OCI-LY7 (cell line): ENCODE measurements at regions of chr17 and their contacts with region 1.

Region 1: DNA sequence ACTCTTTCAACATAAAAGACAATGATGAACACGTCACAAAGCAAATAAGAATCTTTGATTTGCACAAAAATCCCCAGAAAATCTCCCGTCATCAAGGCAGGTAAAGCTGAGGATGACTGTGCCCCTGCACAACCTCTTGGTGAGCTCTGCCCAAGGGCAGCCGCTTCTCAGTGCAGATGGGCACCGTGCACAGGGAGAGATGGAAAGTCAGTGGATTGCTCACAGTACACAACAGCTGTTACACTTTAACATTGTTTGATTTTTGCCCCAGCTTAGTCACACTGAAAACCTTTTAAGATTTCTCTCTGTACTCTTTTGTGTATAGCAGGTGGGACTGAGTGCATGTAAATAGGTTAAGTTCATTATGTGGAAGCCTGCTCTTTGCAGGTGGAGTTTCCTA is 104.2 kb downstream of the CDK5R1 start:
- DNase-seq: no peak
- H3K4me3 ChIP-seq: no peak overlapping the region
- H3K27ac ChIP-seq: no peak overlapping the region
- H3K4me1 ChIP-seq: no peaks in the 10 kb centered on the region
- CTCF ChIP-seq: no peak

Region 2: DNA sequence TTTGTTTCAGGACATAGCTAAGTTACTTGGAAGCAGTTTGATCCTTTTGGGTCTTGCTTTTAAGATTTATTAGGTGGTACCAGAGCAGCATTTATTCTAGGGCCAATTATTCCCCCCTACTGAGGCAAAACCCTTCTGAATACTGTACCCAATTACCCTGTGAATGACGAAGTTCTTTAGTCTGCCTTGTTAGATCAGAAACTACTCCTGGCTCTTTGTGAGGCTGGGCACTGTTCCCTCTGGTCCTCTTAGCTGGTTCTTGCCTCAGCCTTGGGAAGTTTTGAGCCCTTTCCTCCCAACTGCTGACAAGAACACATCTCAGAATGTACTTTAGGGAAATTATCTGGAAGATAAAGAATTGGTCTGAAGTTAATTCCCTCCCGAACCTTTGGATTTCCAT is 11.4 kb after region 1 on chr17:
- CTCF ChIA-PET with region 1: no interaction called
- POLR2A ChIA-PET with region 1: interaction called, 11 read pairs
- intact Hi-C with region 1: no loop called
- DNase-seq: no peak
- H3K4me3 ChIP-seq: no peak overlapping the region
- H3K27ac ChIP-seq: no peak overlapping the region
- H3K4me1 ChIP-seq: no peaks in the 10 kb centered on the region
- CTCF ChIP-seq: no peak

Region 3: DNA sequence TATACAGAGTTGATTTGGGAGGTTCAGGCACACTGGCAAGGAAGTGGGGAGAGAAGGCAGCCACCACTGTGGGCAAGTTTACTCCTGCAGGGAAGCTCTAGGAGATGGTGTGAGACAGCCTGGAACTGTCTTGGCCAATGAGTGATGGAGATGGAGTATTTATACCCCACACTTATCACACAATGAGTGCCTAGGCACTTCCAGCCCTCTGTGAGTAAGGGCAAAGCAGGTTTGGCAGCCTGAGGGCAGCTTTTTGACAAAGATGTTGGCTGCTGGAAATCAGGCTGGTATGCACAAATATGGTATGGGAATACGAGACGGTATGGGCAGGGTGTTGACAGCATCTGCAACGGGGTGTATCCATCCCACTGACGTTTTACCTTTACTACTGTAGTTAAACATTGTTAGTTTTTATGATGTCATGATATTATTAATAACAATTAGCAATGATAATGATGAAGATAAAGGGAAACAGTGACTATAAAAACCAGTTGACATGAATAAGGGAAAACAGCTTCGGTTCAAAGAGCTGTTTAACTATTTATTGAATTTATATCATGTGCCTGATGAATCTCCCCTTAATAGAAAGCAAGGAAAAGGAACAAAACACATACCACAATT is 45.7 kb after region 1 on chr17:
- CTCF ChIA-PET with region 1: no interaction called
- POLR2A ChIA-PET with region 1: no interaction called
- intact Hi-C with region 1: no loop called
- DNase-seq: no peak
- H3K4me3 ChIP-seq: no peak overlapping the region
- H3K27ac ChIP-seq: no peak overlapping the region
- H3K4me1 ChIP-seq: no peaks in the 10 kb centered on the region
- CTCF ChIP-seq: no peak